GM12878 (cell line): ENCODE measurements at regions of chr20 and their contacts with region 1.

Region 1: DNA sequence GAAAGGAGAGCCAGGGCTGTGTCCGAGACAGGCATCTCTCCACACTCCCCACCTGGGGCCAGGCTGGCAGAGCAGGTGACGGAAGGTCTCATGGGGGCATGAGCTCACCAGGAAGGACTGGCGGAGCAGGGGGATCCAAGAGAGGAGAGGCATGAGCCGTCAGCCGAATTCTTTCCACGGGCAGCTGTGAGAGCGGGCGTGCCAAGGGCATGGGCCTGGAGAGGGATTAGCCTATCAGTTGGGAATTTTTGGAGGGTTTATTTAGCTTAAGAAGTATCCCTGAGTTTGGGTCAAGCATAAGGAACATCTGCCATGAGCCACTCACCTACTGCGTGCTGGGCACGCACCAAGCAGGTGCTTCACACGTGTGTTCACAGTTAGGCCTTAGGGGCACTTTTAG is 60.2 kb upstream of the ZNFX1 start:
- DNase-seq: no peak
- ATAC-seq: no peak
- H3K4me3 ChIP-seq: no peak overlapping the region
- H3K27ac ChIP-seq: no peak overlapping the region
- H3K4me1 ChIP-seq: no peaks in the 10 kb centered on the region
- H3K27me3 ChIP-seq: no peaks in the 10 kb centered on the region
- CTCF ChIP-seq: no peak
- EP300 ChIP-seq: no peak
- POLR2A ChIP-seq: no peak
- RAD21 ChIP-seq: no peak

Region 2: GRCh38 chr20:49377326-49377725 is 39.3 kb after region 1 on chr20:
- CTCF ChIA-PET with region 1: no interaction called
- POLR2A ChIA-PET with region 1: no interaction called
- RAD21 ChIA-PET with region 1: no interaction called
- SMC1A ChIA-PET with region 1: no interaction called
- in situ Hi-C with region 1: no loop called
- intact Hi-C with region 1: no loop called
- DNase-seq: no peak
- ATAC-seq: no peak
- H3K4me3 ChIP-seq: no peak overlapping the region
- H3K27ac ChIP-seq: no peak overlapping the region
- H3K4me1 ChIP-seq: no peaks in the 10 kb centered on the region
- H3K27me3 ChIP-seq: peaks cover 0 to 2% of the 10 kb centered on the region in 2 experiments; a peak in 1 of 4 replicates
- CTCF ChIP-seq: no peak
- EP300 ChIP-seq: no peak
- POLR2A ChIP-seq: no peak
- RAD21 ChIP-seq: no peak

Region 3: DNA sequence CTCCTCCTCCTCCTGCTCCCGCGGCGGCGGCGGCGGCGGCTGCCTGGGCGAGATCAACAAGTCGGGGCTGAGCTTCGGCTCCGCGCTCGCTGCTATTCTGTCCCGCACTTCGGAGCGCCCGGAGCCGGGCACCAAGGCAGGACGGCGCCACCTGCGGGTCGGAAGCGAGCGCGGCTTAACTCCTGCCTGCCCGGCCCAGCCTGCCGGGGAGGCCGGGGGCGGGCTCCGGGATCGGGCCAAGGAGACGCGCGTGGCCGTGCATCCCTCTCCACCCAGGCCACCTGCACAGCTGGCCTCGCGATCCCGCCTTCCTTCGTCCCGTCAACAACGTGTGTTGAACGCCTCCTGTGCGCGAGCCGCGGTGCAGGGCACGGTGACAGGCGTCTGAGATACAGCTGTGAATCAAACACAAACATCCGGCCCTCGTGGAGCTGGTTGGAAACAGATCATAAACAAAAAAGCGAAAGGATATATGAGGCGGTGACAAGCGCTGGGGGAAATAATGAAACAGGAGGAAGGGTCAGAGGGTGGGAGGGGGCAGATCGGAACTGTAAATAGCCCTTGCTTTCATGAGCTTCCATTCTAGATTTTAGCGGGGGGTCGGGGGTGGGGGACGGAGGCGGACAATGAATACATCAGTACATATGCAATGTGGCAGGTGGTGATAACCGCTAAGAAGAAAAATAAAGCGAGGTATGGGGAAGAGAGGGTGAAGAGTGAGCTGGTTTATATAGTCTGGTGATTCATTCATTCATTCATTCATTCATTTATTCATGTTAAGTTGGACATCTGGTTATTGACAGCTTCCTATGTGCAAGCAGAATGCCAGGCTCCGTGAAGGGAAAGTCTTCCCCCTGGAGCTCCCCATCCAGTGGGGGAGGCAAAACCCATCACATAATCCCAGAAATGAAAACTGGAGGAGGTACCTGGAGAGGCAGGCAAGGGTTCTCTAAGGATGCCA is 146.4 kb after region 1 on chr20:
- CTCF ChIA-PET with region 1: interaction called, 11 read pairs
- POLR2A ChIA-PET with region 1: no interaction called
- RAD21 ChIA-PET with region 1: no interaction called
- SMC1A ChIA-PET with region 1: interaction called, 5 read pairs
- in situ Hi-C with region 1: no loop called
- intact Hi-C with region 1: loop called (anchors 1 kb)
- DNase-seq: no peak
- ATAC-seq: peak; percentile 94
- H3K4me3 ChIP-seq: 0 out of 2 replicates have a peak overlapping the region, but pooled peaks have one; percentile 12
- H3K27ac ChIP-seq: no peak overlapping the region
- H3K4me1 ChIP-seq: no peaks in the 10 kb centered on the region
- H3K27me3 ChIP-seq: peaks cover 7 to 8% of the 10 kb centered on the region in 2 experiments; a peak in 3 of 4 replicates
- CTCF ChIP-seq: peak; percentile 41 to 63 (median 61)
- EP300 ChIP-seq: no peak
- POLR2A ChIP-seq: no peak
- RAD21 ChIP-seq: peak; percentile 39; the same call in 1 of the 2 replicates

Region 4: DNA sequence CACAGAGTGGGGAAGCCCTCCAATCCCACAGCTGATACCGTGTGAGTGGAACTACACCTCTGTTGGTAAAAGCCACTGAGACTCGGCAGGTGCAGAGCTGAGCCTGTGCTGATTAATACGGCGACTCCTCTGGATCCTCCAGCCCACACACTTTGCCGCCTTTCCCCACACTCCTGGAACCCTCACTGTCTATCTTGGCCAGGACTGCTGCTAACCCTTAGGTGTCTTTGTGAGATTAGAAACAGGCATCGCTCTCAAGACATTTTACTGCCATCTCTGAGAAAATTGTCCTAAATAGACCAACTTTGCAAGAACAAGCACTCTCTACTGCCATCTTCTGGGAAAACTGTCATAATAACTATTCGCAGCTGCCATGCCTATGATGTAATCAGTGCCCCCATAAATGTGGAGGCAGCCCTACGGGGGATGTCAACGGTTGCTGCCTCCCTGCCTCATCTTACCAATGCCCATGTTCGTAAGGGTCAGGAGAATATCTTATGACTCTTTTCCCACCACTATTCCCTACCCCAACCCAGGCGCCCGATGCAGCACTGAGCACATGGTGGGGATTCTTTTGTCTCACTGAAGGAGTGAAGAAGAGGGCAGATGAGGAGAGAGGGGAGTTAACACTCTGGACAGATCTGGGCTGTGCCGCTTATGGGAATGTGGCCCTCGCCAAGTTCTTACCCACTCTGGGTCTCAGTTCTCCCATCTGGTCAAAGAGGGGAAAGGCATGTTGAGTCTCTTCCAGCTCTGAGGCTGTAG is 170.6 kb after region 1 on chr20:
- CTCF ChIA-PET with region 1: interaction called, 22 read pairs
- POLR2A ChIA-PET with region 1: no interaction called
- RAD21 ChIA-PET with region 1: no interaction called
- SMC1A ChIA-PET with region 1: no interaction called
- in situ Hi-C with region 1: loop called (anchors 25 kb)
- intact Hi-C with region 1: loop called (anchors 1 kb)
- DNase-seq: peak; percentile 7
- ATAC-seq: peak; percentile 81
- H3K4me3 ChIP-seq: no peak overlapping the region
- H3K27ac ChIP-seq: no peak overlapping the region
- H3K4me1 ChIP-seq: no peaks in the 10 kb centered on the region
- H3K27me3 ChIP-seq: peaks cover 4% of the 10 kb centered on the region in 2 experiments; a peak in 2 of 4 replicates
- CTCF ChIP-seq: peak; percentile 45 to 55 (median 53); a peak in 5 of 6 replicates
- EP300 ChIP-seq: no peak
- POLR2A ChIP-seq: no peak
- RAD21 ChIP-seq: peak; percentile 44

Region 5: DNA sequence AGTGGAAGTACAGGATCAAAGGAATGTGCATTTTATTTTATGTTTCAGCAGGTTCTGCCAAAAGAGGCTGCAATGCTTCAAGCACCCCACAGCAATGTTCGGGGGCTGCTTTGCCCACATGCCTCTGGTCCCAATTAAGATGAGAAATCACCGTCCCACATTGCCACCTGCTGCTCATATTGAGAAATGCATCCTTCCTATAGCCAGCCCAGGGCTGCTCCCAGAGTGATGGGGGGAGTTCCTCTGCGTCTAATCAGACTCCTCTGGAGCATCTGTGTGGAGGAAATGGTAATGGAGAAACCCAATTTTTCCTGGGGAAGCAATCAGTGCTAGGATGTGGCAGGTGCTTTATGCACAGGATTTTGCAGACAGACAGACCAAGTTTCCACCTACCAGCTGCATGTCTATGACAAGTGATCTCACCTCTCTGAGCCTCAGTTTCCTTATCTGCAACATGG is 196.2 kb after region 1 on chr20:
- CTCF ChIA-PET with region 1: interaction called, 17 read pairs
- POLR2A ChIA-PET with region 1: no interaction called
- RAD21 ChIA-PET with region 1: no interaction called
- SMC1A ChIA-PET with region 1: interaction called, 3 read pairs
- in situ Hi-C with region 1: no loop called
- intact Hi-C with region 1: loop called (anchors 1 kb)
- DNase-seq: peak; percentile 19
- ATAC-seq: peak; percentile 91
- H3K4me3 ChIP-seq: no peak overlapping the region
- H3K27ac ChIP-seq: no peak overlapping the region
- H3K4me1 ChIP-seq: peaks cover 15% of the 10 kb centered on the region
- H3K27me3 ChIP-seq: no peaks in the 10 kb centered on the region
- CTCF ChIP-seq: peak; percentile 74 to 80 (median 76); a peak in 5 of 6 replicates
- EP300 ChIP-seq: no peak
- POLR2A ChIP-seq: no peak
- RAD21 ChIP-seq: peak; percentile 65

Region 6: DNA sequence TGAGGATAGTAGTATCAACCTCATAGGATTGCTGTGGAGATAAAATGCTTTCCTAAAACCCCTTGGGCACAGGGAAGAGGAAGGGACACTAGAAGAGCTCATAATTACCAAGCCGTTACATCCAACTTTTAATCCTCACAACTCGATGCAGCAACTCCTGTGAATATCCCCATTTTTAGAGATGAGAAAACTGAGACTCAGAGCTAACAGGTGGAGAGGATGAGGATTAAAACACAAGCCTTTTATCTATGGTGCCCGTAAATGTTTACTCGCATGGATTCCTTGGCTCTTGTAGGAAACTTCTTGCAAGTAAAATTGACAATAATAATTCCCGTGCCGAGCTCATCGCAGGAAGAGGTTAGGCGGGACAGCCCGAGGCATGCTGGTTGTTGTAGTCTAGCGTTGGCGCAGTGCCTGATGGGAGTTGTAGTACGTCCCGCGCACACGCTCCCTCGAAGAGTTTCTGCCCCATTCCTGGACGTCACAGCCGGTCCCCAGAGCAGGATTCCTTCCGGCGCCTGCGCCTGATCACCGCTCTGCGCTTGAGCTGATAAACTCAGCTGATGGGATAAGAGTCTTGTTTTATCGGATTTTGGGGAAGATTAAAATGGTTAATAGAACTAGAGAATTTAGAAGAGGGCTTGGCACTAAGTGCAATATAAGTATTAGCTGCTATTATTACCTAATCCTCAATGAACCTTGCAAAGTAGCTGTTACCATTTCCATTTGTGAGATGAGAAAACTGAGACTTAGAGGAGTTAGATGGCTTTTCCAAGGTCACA is 777.7 kb after region 1 on chr20:
- CTCF ChIA-PET with region 1: no interaction called
- POLR2A ChIA-PET with region 1: no interaction called
- RAD21 ChIA-PET with region 1: no interaction called
- SMC1A ChIA-PET with region 1: no interaction called
- in situ Hi-C with region 1: no loop called
- intact Hi-C with region 1: no loop called
- DNase-seq: peak; percentile 89
- ATAC-seq: peak; percentile 80
- H3K4me3 ChIP-seq: peak overlapping the region; percentile 96
- H3K27ac ChIP-seq: peak overlapping the region; percentile 65
- H3K4me1 ChIP-seq: peaks cover 22% of the 10 kb centered on the region
- H3K27me3 ChIP-seq: no peaks in the 10 kb centered on the region
- CTCF ChIP-seq: no peak
- EP300 ChIP-seq: no peak
- POLR2A ChIP-seq: peak; percentile 77
- RAD21 ChIP-seq: no peak